Heart left ventricle (tissue), 16 donors: ENCODE measurements at regions of chr2 and their contacts with region 1.

Region 1: DNA sequence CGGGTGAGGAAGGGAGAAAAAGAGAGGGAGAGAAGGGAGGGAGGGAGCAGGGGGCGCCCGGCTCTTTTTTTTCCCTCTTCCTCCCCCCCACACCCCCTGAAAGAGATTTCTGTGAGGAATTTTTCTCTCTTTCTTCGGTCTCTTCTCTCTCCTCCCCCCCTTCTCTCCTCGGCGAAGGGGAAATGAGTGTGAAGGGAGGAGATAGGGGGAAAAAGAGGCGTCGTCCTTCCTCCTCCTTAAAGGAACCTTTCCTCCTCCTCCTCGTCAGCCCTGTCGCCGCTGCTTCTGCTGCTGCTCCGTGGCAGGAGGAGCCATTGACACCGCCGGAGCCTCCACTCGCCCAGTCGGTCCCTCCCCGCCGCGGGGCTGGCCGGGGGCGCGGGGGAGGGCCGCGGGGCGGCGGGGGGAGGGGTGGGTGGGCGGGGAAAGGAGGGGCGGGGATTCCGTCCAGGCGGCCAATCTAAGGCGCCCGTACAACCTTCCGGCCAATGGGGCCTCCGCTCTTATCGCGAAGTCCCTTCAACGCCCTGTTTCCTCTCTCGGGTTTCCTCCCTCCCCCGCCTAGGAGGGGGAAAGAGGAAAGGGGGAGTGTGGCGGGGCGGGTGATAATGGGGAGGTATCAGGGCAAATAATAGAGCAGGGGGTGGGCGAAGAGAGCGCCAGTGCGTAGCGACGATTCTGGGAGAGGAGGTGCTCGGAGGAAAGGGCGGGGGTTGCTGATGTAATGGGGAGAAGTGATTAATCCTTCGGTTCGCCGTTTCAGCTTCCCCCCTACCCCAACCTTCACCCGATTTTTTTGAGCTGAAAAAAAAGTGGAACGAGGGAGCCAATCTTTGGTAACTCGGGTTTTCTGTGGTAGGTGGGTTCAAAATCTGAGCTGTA is at the start of gene FBXO11:
- DNase-seq: peak; percentile 97 to 98 (median 98)
- ATAC-seq: peak; percentile 95 to 98 (median 97)
- H3K4me3 ChIP-seq: peak within 1 kb of the TSS; percentile 75 to 98 (median 92)
- H3K27ac ChIP-seq: peak within 1 kb of the TSS; percentile 96 to 100 (median 99)
- H3K4me1 ChIP-seq: peaks cover 0 to 34% (median 22%) of the 10 kb centered on the region in 12 donors
- H3K27me3 ChIP-seq: no peaks in the 10 kb centered on the region
- CTCF ChIP-seq: peak in 10 of 12 donors; percentile 42 to 79 (median 64)
- POLR2A ChIP-seq: peak; percentile 16 to 77
- total RNA-seq, gene FBXO11: 26.0 to 52.4 (median 35.0) TPM

Region 2: GRCh38 chr2:47016172-47016913 is 890.1 kb before region 1 on chr2:
- intact Hi-C with region 1: no loop called
- DNase-seq: peak in 1 of 5 donors; percentile 41
- ATAC-seq: peak in 2 of 4 donors; percentile 25 to 29
- H3K4me3 ChIP-seq: no peak overlapping the region
- H3K27ac ChIP-seq: peak overlapping the region in 10 of 12 donors; percentile 8 to 63 (median 38)
- H3K4me1 ChIP-seq: peaks cover 0 to 55% (median 34%) of the 10 kb centered on the region in 12 donors
- H3K27me3 ChIP-seq: no peaks in the 10 kb centered on the region
- CTCF ChIP-seq: peak in 1 of 12 donors; percentile 8
- POLR2A ChIP-seq: no peak

Region 3: DNA sequence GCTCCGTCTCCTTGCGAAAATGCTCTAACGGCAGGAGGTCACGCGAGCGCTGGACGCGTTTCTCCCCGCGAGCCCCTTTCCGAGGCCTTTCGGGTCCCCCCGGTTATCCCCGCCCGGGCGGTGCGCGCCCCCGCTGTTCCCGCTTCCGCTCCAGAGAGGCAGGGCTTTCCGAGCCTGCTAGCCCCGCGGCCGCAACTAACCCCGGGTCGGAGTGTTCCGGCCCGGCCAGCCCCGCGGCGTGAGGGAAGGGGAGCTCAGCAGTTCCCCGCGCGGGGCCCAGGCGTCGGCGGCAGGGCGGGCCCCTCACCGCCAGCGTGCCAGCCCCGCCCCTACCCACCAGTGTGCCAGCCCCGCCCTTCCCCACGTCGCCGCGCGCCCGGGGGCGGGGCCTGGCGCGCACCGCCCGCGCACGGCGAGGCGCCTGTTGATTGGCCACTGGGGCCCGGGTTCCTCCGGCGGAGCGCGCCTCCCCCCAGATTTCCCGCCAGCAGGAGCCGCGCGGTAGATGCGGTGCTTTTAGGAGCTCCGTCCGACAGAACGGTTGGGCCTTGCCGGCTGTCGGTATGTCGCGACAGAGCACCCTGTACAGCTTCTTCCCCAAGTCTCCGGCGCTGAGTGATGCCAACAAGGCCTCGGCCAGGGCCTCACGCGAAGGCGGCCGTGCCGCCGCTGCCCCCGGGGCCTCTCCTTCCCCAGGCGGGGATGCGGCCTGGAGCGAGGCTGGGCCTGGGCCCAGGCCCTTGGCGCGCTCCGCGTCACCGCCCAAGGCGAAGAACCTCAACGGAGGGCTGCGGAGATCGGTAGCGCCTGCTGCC is 123.5 kb before region 1 on chr2 and contains the start of gene MSH6:
- intact Hi-C with region 1: loop called in 9 of 10 experiments (anchors 2 to 10 kb)
- DNase-seq: peak; percentile 90 to 94 (median 91)
- ATAC-seq: peak; percentile 89 to 99 (median 98)
- H3K4me3 ChIP-seq: peak within 1 kb of the TSS; percentile 65 to 97 (median 88)
- H3K27ac ChIP-seq: peak within 1 kb of the TSS; percentile 54 to 95 (median 90)
- H3K4me1 ChIP-seq: peaks cover 0 to 38% (median 10%) of the 10 kb centered on the region in 12 donors
- H3K27me3 ChIP-seq: no peaks in the 10 kb centered on the region
- CTCF ChIP-seq: peak in 3 of 12 donors; percentile 6 to 19 (median 15)
- POLR2A ChIP-seq: peak in 1 of 2 donors; percentile 86
- total RNA-seq, gene MSH6: 19.6 to 40.7 (median 23.3) TPM

Region 4: GRCh38 chr2:47842846-47843245 is 63.6 kb before region 1 on chr2:
- intact Hi-C with region 1: loop called in 1 of 10 experiments (anchors 10 kb)
- DNase-seq: no peak
- ATAC-seq: peak in 1 of 4 donors; percentile 29
- H3K4me3 ChIP-seq: no peak overlapping the region
- H3K27ac ChIP-seq: no peak overlapping the region
- H3K4me1 ChIP-seq: peaks cover 0 to 40% (median 27%) of the 10 kb centered on the region in 12 donors
- H3K27me3 ChIP-seq: no peaks in the 10 kb centered on the region
- CTCF ChIP-seq: no peak
- POLR2A ChIP-seq: no peak

Region 5: DNA sequence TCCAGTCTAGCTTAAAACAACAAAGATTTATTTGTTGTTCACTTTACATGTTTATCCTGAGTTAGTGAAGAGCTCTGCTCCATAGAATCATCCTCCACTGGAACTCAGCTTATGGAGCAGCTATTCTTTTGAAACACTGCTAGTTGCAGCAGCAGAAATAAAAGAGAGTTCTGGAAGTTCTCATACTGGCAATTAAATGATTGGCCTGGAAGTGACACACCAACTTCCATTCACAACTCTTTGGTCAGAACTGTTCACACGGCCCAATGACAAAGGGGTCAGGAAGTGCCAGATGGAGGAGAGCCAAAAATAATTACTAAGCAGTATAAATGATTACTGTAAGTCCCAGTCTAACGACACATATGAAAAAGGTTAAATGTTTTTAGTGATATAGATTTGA is 39.2 kb before region 1 on chr2:
- intact Hi-C with region 1: loop called in 7 of 10 experiments (anchors 5 kb)
- DNase-seq: peak in 3 of 5 donors; percentile 35 to 57 (median 43)
- ATAC-seq: peak; percentile 89 to 95 (median 93)
- H3K4me3 ChIP-seq: no peak overlapping the region
- H3K27ac ChIP-seq: peak overlapping the region in 9 of 12 donors; percentile 6 to 53 (median 40)
- H3K4me1 ChIP-seq: peaks cover 5 to 90% (median 43%) of the 10 kb centered on the region in 12 donors
- H3K27me3 ChIP-seq: no peaks in the 10 kb centered on the region
- CTCF ChIP-seq: no peak
- POLR2A ChIP-seq: no peak

Region 6: DNA sequence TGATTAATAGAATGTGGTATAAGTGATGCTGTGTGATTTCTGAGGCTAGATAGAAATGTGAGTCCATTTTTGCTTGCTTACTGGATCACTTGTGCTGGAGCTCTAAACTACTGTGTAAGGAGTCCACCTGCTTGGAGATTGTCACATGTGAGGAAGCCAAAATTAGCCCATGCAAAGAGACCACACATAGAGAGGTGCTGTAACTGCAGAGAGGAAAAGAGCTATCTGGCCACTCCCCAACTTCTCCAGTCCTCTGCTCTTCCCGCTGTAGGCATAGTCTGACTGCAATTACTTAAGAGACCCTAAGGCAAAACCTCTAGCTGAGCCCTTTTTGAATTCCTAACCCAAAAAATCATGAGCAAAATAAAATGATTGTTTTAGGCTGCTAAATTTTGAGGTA is 120.5 kb after region 1 on chr2:
- intact Hi-C with region 1: no loop called
- DNase-seq: no peak
- ATAC-seq: no peak
- H3K4me3 ChIP-seq: no peak overlapping the region
- H3K27ac ChIP-seq: no peak overlapping the region
- H3K4me1 ChIP-seq: no peaks in the 10 kb centered on the region
- H3K27me3 ChIP-seq: peaks cover 0 to 5% (median 0%) of the 10 kb centered on the region in 9 donors
- CTCF ChIP-seq: no peak
- POLR2A ChIP-seq: no peak

Region 7: GRCh38 chr2:48414980-48415835 is 508.8 kb after region 1 on chr2:
- intact Hi-C with region 1: loop called in 1 of 10 experiments (anchors 5 kb)
- DNase-seq: peak in 3 of 5 donors; percentile 18 to 47 (median 31)
- ATAC-seq: peak; percentile 43 to 64 (median 54)
- H3K4me3 ChIP-seq: peak overlapping the region in 1 of 12 donors; percentile 7
- H3K27ac ChIP-seq: peak overlapping the region in 3 of 12 donors; percentile 16 to 51 (median 26)
- H3K4me1 ChIP-seq: peaks cover 0 to 54% (median 26%) of the 10 kb centered on the region in 12 donors
- H3K27me3 ChIP-seq: no peaks in the 10 kb centered on the region
- CTCF ChIP-seq: no peak
- POLR2A ChIP-seq: no peak